CD8-positive, alpha-beta memory T cell (primary cell): ENCODE measurements at regions of chr5 and their contacts with region 1.

Region 1: DNA sequence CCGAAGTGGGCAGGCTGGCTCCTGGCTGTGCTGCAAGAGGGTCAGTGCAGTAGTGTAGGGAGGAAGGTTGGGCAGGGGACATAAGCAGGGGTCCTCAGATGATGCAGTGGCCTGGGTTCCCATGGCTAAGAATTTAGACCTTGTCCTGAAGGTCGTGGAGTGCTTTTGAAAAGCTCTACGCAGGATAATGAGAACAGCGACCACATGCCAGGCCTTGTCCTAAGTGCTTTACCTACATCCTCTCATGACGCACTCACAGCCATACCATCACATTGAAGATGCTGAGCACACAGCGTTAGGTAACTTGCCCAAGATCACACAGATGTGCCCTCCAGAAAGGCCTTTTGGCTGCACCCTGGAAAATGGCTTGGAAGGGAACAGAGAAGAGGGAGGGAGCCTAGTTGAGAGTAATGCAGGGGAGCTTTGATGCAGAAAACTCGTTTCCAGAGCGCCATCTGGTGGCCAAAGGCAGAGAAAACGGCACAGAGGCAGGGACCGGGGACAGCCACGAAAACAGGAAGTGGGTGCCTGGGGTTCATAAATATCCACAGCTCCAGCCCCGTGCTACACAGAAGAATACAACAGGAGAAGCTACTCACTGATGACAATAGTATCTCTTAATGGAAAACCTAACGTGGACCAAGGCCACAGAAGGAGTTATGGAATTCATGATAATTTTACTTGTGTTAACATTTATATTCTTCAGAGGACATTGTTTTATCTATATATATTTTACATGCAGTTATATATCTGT is 2.6 kb upstream of the PCDH12 start:
- DNase-seq: peak; percentile 82 to 91 (median 84)
- H3K4me3 ChIP-seq: peak overlapping the region; percentile 28
- H3K4me3 Mint-ChIP-seq: peak overlapping the region; percentile 6 to 76 (median 52)
- H3K27ac ChIP-seq: no peak overlapping the region
- H3K27ac Mint-ChIP-seq: peak overlapping the region; percentile 8 to 92 (median 84)
- H3K4me1 ChIP-seq: peaks cover 39% of the 10 kb centered on the region
- H3K4me1 Mint-ChIP-seq: peaks cover 42 to 50% (median 48%) of the 10 kb centered on the region in 3 donors
- H3K27me3 ChIP-seq: no peaks in the 10 kb centered on the region
- H3K27me3 Mint-ChIP-seq: no peaks in the 10 kb centered on the region

Region 2: GRCh38 chr5:141664732-141665461 is 295.7 kb before region 1 on chr5:
- CTCF ChIA-PET with region 1: interaction called, 13 read pairs
- POLR2A ChIA-PET with region 1: no interaction called
- DNase-seq: peak; percentile 49 to 79 (median 62)
- H3K4me3 ChIP-seq: no peak overlapping the region
- H3K4me3 Mint-ChIP-seq: no peak overlapping the region
- H3K27ac ChIP-seq: no peak overlapping the region
- H3K27ac Mint-ChIP-seq: no peak overlapping the region
- H3K4me1 ChIP-seq: no peaks in the 10 kb centered on the region
- H3K4me1 Mint-ChIP-seq: peaks cover 4 to 5% (median 4%) of the 10 kb centered on the region in 3 donors
- H3K27me3 ChIP-seq: no peaks in the 10 kb centered on the region
- H3K27me3 Mint-ChIP-seq: peaks cover 0 to 2% of the 10 kb centered on the region in 2 donors

Region 3: DNA sequence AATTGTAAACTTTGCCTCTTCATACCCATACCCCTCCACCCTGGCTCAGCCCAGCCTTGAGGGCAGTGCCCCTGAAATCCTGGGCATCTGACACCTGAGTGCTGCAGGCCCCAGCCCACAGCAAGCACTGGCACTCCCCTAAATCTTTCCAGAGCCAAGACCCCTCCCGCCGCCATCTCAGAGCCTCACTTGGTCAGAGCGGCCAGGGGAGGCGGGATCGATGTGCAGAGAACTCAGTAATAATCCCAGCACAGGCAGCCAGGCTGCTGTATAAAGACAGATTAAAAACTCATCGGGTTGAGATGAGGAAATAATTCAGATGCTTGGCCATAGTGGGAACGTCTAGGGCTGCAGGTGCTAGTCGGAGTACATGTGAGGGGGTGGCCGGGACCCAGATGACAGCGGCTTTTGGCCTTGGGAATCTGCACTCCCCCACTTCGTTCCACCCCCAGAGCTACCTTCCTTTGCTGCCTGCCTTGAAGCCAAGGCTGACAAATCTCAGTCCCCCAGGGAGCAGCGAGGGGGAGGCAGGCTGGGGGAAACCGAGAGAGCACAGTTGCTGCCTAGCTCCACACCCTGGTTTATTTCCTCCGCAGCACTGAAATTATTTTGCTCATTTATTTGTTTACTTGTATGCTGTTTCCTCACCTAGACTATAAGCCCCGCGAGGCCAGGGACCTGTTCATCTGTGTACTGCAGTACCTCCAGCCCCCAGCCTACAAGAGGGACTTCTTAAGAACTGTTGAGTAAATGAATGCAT is 259.1 kb before region 1 on chr5:
- CTCF ChIA-PET with region 1: interaction called, 50 read pairs
- POLR2A ChIA-PET with region 1: interaction called, 7 read pairs
- DNase-seq: no peak
- H3K4me3 ChIP-seq: peak overlapping the region; percentile 16
- H3K4me3 Mint-ChIP-seq: peak overlapping the region in 4 of 7 donors; percentile 11 to 91 (median 62)
- H3K27ac ChIP-seq: no peak overlapping the region
- H3K27ac Mint-ChIP-seq: peak overlapping the region in 6 of 8 donors; percentile 20 to 98 (median 63)
- H3K4me1 ChIP-seq: peaks cover 12% of the 10 kb centered on the region
- H3K4me1 Mint-ChIP-seq: peaks cover 12 to 20% (median 13%) of the 10 kb centered on the region in 3 donors
- H3K27me3 ChIP-seq: peaks cover 18% of the 10 kb centered on the region
- H3K27me3 Mint-ChIP-seq: peaks cover 25 to 40% of the 10 kb centered on the region in 2 donors

Region 4: GRCh38 chr5:141923448-141924352 is 36.9 kb before region 1 on chr5 and contains the start of gene DELE1:
- CTCF ChIA-PET with region 1: interaction called, 18 read pairs
- POLR2A ChIA-PET with region 1: interaction called, 12 read pairs
- DNase-seq: peak; percentile 83 to 93 (median 88)
- H3K4me3 ChIP-seq: peak within 1 kb of the TSS; percentile 92
- H3K4me3 Mint-ChIP-seq: peak within 1 kb of the TSS; percentile 80 to 98 (median 90)
- H3K27ac ChIP-seq: peak within 1 kb of the TSS; percentile 97
- H3K27ac Mint-ChIP-seq: peak within 1 kb of the TSS; percentile 92 to 99 (median 98)
- H3K4me1 ChIP-seq: peaks cover 15% of the 10 kb centered on the region
- H3K4me1 Mint-ChIP-seq: peaks cover 16 to 47% (median 37%) of the 10 kb centered on the region in 3 donors
- H3K27me3 ChIP-seq: no peaks in the 10 kb centered on the region
- H3K27me3 Mint-ChIP-seq: no peaks in the 10 kb centered on the region
- total RNA-seq, gene DELE1: 48.8 to 50.2 TPM

Region 5: GRCh38 chr5:141976176-141976575 is 15.6 kb after region 1 on chr5:
- CTCF ChIA-PET with region 1: interaction called, 76 read pairs
- POLR2A ChIA-PET with region 1: interaction called, 9 read pairs
- DNase-seq: no peak
- H3K4me3 ChIP-seq: no peak overlapping the region
- H3K4me3 Mint-ChIP-seq: no peak overlapping the region
- H3K27ac ChIP-seq: no peak overlapping the region
- H3K27ac Mint-ChIP-seq: peak overlapping the region in 1 of 8 donors; percentile 61
- H3K4me1 ChIP-seq: peaks cover 8% of the 10 kb centered on the region
- H3K4me1 Mint-ChIP-seq: peaks cover 13 to 40% (median 29%) of the 10 kb centered on the region in 3 donors
- H3K27me3 ChIP-seq: no peaks in the 10 kb centered on the region
- H3K27me3 Mint-ChIP-seq: no peaks in the 10 kb centered on the region